Common myeloid progenitor, CD34-positive (primary cell): ENCODE measurements at regions of chr20 and their contacts with region 1.

Region 1: DNA sequence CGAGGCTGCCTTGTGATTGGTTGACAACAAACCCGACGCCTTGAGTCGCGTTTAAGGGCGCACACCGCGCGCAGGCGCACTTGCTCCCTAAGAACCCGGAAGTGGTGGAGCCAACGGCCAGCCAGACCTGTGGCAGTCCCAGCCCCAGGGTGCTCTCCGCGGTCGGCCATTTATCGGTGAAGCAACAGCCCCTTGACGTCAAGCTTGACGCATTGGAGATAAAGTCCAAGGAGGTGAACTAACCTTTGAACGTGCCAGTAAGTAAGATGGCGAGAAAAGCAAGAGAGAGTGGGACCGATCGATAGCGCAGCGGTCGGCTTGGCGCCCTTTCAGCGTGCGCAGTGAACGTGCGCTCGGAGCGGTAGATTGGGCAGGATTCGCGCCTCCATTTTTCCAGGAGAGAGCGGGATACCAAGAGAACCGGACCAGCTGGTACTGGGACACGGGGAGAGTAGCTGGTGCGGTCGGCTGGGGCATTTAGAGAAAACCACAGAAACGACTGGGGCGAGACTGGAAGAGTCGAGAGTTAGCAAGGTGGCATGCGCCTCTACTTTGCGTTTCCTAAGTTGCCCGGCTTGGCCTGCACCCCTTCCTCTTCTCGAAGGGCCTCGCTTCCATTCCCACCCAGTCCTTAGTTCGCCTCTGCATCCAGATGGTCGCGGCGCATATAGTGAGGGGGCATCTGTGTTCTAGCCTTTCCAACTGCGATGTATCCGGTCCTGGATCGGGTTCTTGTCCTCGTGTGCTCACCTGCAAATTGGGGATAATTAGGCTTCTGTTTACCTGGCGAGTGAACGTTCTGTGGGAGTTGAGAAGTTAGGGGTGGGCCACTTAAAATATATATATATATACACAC is at the start of gene CSTF1:
- DNase-seq: peak; percentile 99 to 100 (median 100)
- H3K4me3 ChIP-seq: peak within 1 kb of the TSS; percentile 75 to 99 (median 97)
- H3K27ac ChIP-seq: peak within 1 kb of the TSS; percentile 92 to 95
- H3K4me1 ChIP-seq: peaks cover 17 to 28% (median 18%) of the 10 kb centered on the region in 4 experiments
- H3K27me3 ChIP-seq: no peaks in the 10 kb centered on the region

Region 2: DNA sequence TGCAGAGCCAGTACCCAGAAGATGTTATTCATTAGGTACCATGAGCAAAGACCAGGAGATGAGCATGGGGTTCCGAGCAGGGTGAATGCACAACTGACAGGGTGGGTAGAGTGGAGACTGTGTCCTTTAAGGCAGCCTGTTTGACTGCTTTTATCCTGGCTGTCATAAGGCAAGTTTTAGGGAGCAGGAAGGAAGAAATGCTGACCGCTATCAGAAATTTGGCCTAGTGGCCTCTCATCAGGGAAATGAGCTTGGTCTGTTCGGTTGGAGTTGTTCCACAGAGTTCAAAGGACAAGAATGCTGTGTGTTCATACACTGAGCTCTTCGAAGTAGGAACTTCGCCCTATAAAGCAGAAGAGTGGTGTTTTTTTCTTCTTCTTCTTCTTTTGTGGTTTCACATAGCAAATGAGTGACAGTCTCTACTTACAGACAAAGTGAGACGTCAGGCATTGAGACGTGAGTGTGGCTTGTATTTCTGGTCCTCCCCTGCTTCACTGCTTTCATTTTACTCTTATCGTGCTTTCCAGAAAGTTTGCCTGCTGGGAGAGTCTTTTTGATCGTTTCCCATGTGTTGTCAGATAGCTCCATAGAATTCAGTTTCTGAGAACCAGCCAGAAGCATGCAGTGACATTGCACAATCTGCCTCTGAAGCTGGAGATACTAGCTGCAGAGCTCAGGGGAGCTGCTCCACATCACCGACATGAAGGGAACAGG is 19.4 kb after region 1 on chr20 and contains the start of gene CASS4:
- CTCF ChIA-PET with region 1: interaction called, 22 read pairs
- POLR2A ChIA-PET with region 1: interaction called, 3 read pairs
- DNase-seq: peak; percentile 83 to 95 (median 91)
- H3K4me3 ChIP-seq: peak within 1 kb of the TSS in 6 of 7 experiments; percentile 23 to 79 (median 66)
- H3K27ac ChIP-seq: peak within 1 kb of the TSS; percentile 69 to 85
- H3K4me1 ChIP-seq: peaks cover 8 to 69% (median 23%) of the 10 kb centered on the region in 4 experiments
- H3K27me3 ChIP-seq: no peaks in the 10 kb centered on the region

Region 3: GRCh38 chr20:56422076-56422823 is 29.7 kb after region 1 on chr20:
- CTCF ChIA-PET with region 1: interaction called, 18 read pairs
- POLR2A ChIA-PET with region 1: no interaction called
- DNase-seq: peak; percentile 42 to 64 (median 50)
- H3K4me3 ChIP-seq: peak overlapping the region in 1 of 7 experiments; percentile 5
- H3K27ac ChIP-seq: peak overlapping the region; percentile 22 to 40
- H3K4me1 ChIP-seq: peaks cover 28 to 84% (median 57%) of the 10 kb centered on the region in 4 experiments
- H3K27me3 ChIP-seq: no peaks in the 10 kb centered on the region

Region 4: DNA sequence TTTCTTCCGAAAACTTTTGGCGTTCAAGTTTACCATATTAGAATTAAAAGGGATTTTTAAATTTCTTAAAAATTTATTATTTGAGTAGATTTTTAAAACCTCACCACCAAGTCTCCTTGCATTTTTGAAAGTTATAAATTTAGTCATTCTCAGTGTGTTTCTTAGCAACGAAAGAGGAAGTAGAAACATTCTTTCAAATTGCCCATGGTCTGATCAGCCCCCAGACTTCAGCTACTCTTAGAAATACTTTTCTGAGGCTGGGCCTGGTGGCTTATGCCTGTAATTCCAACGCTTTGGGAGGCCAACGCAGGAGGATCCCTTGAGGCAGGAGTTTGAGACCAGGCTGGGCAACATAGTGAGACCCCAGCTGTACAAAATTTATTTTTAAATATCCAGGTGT is 60.8 kb after region 1 on chr20:
- CTCF ChIA-PET with region 1: no interaction called
- POLR2A ChIA-PET with region 1: no interaction called
- DNase-seq: peak; percentile 64 to 88 (median 82)
- H3K4me3 ChIP-seq: no peak overlapping the region
- H3K27ac ChIP-seq: peak overlapping the region; percentile 84 to 85
- H3K4me1 ChIP-seq: peaks cover 0 to 10% (median 7%) of the 10 kb centered on the region in 4 experiments
- H3K27me3 ChIP-seq: no peaks in the 10 kb centered on the region

Region 5: GRCh38 chr20:56513161-56514150 is 120.9 kb after region 1 on chr20:
- CTCF ChIA-PET with region 1: interaction called, 20 read pairs
- POLR2A ChIA-PET with region 1: no interaction called
- DNase-seq: no peak
- H3K4me3 ChIP-seq: no peak overlapping the region
- H3K27ac ChIP-seq: no peak overlapping the region
- H3K4me1 ChIP-seq: no peaks in the 10 kb centered on the region
- H3K27me3 ChIP-seq: no peaks in the 10 kb centered on the region